Natural killer cell (primary cell): ENCODE measurements at regions of chr1 and their contacts with region 1.

Region 1: DNA sequence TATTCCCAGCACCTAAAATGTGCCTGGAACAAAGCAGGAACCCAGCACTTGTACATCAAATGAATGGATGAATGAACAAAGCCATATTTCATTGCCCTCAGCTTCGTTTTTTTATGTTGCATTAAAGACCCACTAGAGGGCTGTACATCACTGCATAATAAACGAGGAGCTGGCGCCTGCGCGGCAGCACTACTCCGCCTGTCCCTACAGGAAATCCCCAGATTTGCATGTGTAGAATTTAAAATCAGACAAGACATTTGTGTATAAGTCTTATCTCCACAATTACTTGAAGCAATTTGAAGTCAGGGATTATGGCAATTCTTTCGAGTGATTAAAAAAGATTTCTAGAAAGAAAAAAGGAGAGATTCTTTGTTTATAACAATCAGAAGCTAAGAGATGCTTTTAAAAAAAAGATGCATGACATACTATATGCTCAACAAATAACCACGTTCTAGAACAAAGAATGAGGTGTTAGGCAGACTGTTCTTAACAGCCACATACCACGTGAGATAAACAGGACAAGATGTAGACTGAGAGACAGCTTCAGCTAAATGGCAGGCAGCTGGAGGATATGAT is 5.4 kb upstream of the NEK2 start:
- DNase-seq: peak; percentile 58 to 93
- ATAC-seq: peak; percentile 91 to 96 (median 93)
- H3K4me3 ChIP-seq: no peak overlapping the region
- H3K4me3 Mint-ChIP-seq: peak overlapping the region; percentile 74
- H3K27ac ChIP-seq: peak overlapping the region; percentile 77
- H3K27ac Mint-ChIP-seq: peak overlapping the region; percentile 91 to 98
- H3K4me1 ChIP-seq: peaks cover 30% of the 10 kb centered on the region
- H3K4me1 Mint-ChIP-seq: peaks cover 30 to 32% of the 10 kb centered on the region in 2 donors
- H3K27me3 ChIP-seq: no peaks in the 10 kb centered on the region
- H3K27me3 Mint-ChIP-seq: no peaks in the 10 kb centered on the region
- CTCF ChIP-seq: peak; percentile 72

Region 2: DNA sequence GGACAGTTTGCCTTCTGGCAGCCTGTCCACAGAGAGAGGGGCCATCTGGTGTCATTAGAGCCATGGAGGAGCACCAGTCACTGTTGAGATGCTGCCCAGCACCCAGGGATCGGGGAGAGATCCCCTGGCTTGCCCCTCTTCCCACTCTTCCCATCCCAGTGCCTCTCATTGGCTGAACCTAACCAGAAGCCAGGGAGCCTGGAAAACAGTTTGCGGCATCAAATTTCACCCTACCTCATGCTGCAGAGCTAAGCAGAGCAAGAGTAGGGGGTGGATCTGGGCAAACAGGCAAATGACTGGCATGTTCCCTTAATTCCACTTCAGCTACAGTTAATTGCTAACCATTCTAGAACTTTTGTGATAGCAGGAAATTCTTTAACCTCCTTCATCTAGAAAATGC is 335.1 kb before region 1 on chr1:
- intact Hi-C with region 1: no loop called
- DNase-seq: no peak
- ATAC-seq: no peak
- H3K4me3 ChIP-seq: no peak overlapping the region
- H3K4me3 Mint-ChIP-seq: no peak overlapping the region
- H3K27ac ChIP-seq: no peak overlapping the region
- H3K27ac Mint-ChIP-seq: peak overlapping the region in 1 of 2 donors; percentile 13
- H3K4me1 ChIP-seq: peaks cover 47% of the 10 kb centered on the region
- H3K4me1 Mint-ChIP-seq: peaks cover 52 to 80% of the 10 kb centered on the region in 2 donors
- H3K27me3 ChIP-seq: no peaks in the 10 kb centered on the region
- H3K27me3 Mint-ChIP-seq: no peaks in the 10 kb centered on the region
- CTCF ChIP-seq: no peak

Region 3: DNA sequence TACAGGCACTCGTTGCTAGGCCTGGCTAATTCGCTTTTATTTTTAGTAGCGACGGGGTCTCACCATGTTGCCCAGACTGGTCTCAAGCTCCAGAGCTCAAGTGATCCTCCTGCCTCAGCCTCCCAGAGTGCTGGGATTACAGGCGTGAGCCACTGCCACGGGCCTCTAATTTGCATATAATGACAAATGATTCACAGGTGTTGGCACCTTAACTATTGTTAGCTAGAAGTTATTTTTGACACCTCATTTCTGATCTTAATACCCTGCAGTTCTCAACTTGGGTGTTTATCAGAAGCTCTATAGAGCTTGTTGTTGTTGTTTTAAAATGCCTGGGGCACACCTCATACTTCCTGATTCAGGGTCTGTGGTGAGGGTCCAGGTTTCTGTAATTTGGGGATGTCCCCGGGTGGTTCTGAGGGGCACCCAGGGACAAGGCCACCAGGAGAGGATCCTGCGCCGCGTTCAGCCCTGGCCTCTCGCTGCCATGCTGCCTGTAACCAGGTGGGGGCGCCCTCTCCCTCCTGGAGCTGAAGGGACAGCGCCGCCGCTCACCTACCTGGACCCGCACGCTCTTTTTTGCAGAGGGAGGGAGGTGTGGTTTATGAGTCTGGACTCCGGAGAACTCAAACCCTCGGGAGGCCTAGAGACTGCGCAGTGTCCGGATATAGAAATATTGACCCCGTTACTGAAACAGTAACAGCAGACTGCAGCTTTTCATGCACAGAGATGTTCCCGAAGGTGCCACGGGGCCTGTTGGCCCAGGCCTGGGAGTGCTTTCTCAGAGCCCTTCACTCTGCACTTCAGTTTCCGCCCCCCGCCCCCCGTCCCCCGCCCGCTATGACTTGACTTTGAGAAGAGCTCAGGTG is 17.6 kb after region 1 on chr1:
- intact Hi-C with region 1: loop called (anchors 2 kb)
- DNase-seq: peak; percentile 85
- ATAC-seq: peak; percentile 89 to 93 (median 92)
- H3K4me3 ChIP-seq: no peak overlapping the region
- H3K4me3 Mint-ChIP-seq: peak overlapping the region; percentile 25
- H3K27ac ChIP-seq: no peak overlapping the region
- H3K27ac Mint-ChIP-seq: peak overlapping the region in 1 of 2 donors; percentile 47
- H3K4me1 ChIP-seq: peaks cover 54% of the 10 kb centered on the region
- H3K4me1 Mint-ChIP-seq: peaks cover 39 to 45% of the 10 kb centered on the region in 2 donors
- H3K27me3 ChIP-seq: no peaks in the 10 kb centered on the region
- H3K27me3 Mint-ChIP-seq: peaks cover 0 to 3% of the 10 kb centered on the region in 2 donors
- CTCF ChIP-seq: peak; percentile 98

Region 4: GRCh38 chr1:212012034-212012740 is 331.3 kb after region 1 on chr1:
- intact Hi-C with region 1: loop called (anchors 5 kb)
- DNase-seq: peak; percentile 39 to 82
- ATAC-seq: peak; percentile 93 to 100 (median 100)
- H3K4me3 ChIP-seq: no peak overlapping the region
- H3K4me3 Mint-ChIP-seq: no peak overlapping the region
- H3K27ac ChIP-seq: no peak overlapping the region
- H3K27ac Mint-ChIP-seq: peak overlapping the region in 1 of 2 donors; percentile 59
- H3K4me1 ChIP-seq: no peaks in the 10 kb centered on the region
- H3K4me1 Mint-ChIP-seq: peaks cover 0 to 6% of the 10 kb centered on the region in 2 donors
- H3K27me3 ChIP-seq: no peaks in the 10 kb centered on the region
- H3K27me3 Mint-ChIP-seq: no peaks in the 10 kb centered on the region
- CTCF ChIP-seq: peak; percentile 84

Region 5: DNA sequence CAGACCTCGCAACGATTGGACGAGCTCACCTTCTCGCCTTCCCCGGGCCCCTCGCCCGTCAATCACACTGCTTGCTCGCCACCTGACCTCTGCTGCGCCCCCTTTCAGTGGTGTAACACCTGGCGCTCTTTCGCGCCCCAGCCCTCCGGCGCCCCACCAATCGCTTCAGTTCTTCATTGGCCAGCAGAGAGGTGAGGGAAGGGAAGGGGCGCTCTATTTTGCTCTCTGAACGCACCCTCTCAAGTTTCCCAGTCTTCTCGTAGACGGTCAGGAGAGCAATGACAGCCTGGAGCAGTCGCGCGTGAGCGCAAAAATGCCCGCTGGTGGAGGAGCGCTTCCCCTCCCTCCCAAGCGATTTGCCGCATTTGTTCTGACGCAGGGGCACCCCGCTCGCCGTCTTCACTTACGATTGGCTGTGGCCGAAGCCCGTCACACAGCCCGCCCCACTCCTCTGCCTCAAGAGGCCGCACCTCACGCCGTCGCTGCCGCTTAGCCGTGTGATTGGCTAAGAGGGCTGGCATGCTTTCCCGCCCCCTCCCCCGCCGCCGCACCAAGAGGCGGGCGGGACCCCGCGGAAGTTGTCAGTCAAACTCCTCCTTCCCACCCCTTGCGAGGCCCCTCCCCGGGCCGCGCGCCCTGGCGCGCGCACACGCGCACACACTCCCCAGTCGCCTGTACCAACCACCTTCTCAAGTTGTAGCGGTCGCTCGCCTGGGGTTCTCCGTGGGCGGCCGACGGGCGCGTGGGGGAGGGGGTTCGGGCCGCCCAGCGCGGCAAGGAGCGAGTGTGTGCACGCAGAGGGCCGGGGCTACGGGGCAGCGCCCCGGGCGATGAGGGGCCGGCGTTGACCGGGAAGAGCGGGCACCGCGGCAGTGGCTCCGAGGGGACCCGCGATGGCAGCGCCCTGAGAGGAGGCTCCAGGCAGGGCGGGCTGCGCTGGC is 604.2 kb after region 1 on chr1 and contains the start of gene PPP2R5A:
- intact Hi-C with region 1: loop called (anchors 2 kb)
- DNase-seq: peak; percentile 98 to 99
- ATAC-seq: peak; percentile 82 to 95 (median 85)
- H3K4me3 ChIP-seq: peak within 1 kb of the TSS; percentile 100
- H3K4me3 Mint-ChIP-seq: peak within 1 kb of the TSS; percentile 97
- H3K27ac ChIP-seq: peak within 1 kb of the TSS; percentile 97
- H3K27ac Mint-ChIP-seq: peak within 1 kb of the TSS; percentile 96 to 99
- H3K4me1 ChIP-seq: peaks cover 12% of the 10 kb centered on the region
- H3K4me1 Mint-ChIP-seq: peaks cover 48 to 58% of the 10 kb centered on the region in 2 donors
- H3K27me3 ChIP-seq: no peaks in the 10 kb centered on the region
- H3K27me3 Mint-ChIP-seq: no peaks in the 10 kb centered on the region
- CTCF ChIP-seq: peak; percentile 38
- total RNA-seq, gene PPP2R5A: 74.0 to 99.8 (median 86.4) TPM

Region 6: GRCh38 chr1:212455803-212456528 is 775.1 kb after region 1 on chr1:
- intact Hi-C with region 1: loop called (anchors 2 kb)
- DNase-seq: peak; percentile 80 to 88
- ATAC-seq: peak; percentile 77 to 90 (median 89)
- H3K4me3 ChIP-seq: no peak overlapping the region
- H3K4me3 Mint-ChIP-seq: no peak overlapping the region
- H3K27ac ChIP-seq: no peak overlapping the region
- H3K27ac Mint-ChIP-seq: no peak overlapping the region
- H3K4me1 ChIP-seq: peaks cover 3% of the 10 kb centered on the region
- H3K4me1 Mint-ChIP-seq: peaks cover 0 to 12% of the 10 kb centered on the region in 2 donors
- H3K27me3 ChIP-seq: no peaks in the 10 kb centered on the region
- H3K27me3 Mint-ChIP-seq: no peaks in the 10 kb centered on the region
- CTCF ChIP-seq: peak; percentile 95